A549 (cell line): ENCODE measurements at regions of chr21 and their contacts with region 1.

Region 1: GRCh38 chr21:29002442-29003144 is 9.9 kb upstream of the LTN1 start:
- DNase-seq: peak; percentile 84 to 96
- ATAC-seq: peak; percentile 100
- H3K4me3 ChIP-seq: peak overlapping the region; percentile 81
- H3K27ac ChIP-seq: peak overlapping the region; percentile 86 to 93
- H3K4me1 ChIP-seq: no peaks in the 10 kb centered on the region
- CTCF ChIP-seq: no peak
- EP300 ChIP-seq: no peak
- POLR2A ChIP-seq: peak; percentile 98
- RAD21 ChIP-seq: no peak

Region 2: GRCh38 chr21:29018540-29018939 is 15.9 kb after region 1 on chr21:
- CTCF ChIA-PET with region 1: interaction called, 3 read pairs
- POLR2A ChIA-PET with region 1: interaction called, 40 read pairs
- DNase-seq: no peak
- ATAC-seq: peak in 1 of 2 experiments; percentile 52; a peak in 3 of 6 replicates
- H3K4me3 ChIP-seq: peak overlapping the region; percentile 98
- H3K27ac ChIP-seq: peak overlapping the region; percentile 94 to 96
- H3K4me1 ChIP-seq: peaks cover 13% of the 10 kb centered on the region; the same call in 2 of the 3 replicates
- CTCF ChIP-seq: no peak
- EP300 ChIP-seq: no peak
- POLR2A ChIP-seq: no peak
- RAD21 ChIP-seq: no peak

Region 3: DNA sequence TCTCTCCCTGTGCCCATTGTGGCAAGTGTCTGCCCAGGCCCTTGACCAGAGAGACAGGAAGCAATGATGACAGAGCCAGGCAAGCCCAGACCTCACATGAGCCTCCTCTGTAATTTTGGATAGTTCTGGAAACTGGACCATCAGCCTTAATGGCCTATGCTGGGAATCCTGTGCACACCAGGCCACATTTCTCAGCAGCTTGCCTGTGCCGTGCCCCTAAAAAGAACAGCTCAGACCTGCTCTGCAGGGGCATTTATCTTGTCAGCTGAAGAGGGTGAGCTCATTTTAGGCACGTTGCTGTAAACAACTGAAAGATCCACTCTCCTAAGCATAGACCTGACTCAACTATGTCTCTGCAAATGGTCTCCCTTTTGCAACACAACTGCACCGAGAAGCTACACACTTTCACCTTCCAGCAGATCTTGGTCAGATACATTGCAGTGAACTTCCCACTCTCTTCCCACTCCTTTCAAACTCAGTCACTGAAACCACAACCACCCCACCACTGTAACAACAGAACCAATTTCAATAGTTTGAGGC is 242.6 kb after region 1 on chr21:
- CTCF ChIA-PET with region 1: no interaction called
- POLR2A ChIA-PET with region 1: no interaction called
- DNase-seq: no peak
- ATAC-seq: no peak
- H3K4me3 ChIP-seq: no peak overlapping the region
- H3K27ac ChIP-seq: no peak overlapping the region
- H3K4me1 ChIP-seq: no peaks in the 10 kb centered on the region
- CTCF ChIP-seq: no peak
- EP300 ChIP-seq: no peak
- POLR2A ChIP-seq: no peak
- RAD21 ChIP-seq: no peak